ENCODE measurements at regions of chr3 and their contacts with region 1.

Region 1: GRCh38 chr3:69691860-69692259 is 47.4 kb upstream of the MITF start:
- DNase-seq: no peak
- H3K4me3 ChIP-seq: no peak overlapping the region
- H3K4me1 ChIP-seq: 0 out of 2 replicates have a peak, but pooled peaks cover 2% of the 10 kb centered on the region
- H3K27me3 ChIP-seq: 0 out of 2 replicates have a peak, but pooled peaks cover 3% of the 10 kb centered on the region

Region 2: DNA sequence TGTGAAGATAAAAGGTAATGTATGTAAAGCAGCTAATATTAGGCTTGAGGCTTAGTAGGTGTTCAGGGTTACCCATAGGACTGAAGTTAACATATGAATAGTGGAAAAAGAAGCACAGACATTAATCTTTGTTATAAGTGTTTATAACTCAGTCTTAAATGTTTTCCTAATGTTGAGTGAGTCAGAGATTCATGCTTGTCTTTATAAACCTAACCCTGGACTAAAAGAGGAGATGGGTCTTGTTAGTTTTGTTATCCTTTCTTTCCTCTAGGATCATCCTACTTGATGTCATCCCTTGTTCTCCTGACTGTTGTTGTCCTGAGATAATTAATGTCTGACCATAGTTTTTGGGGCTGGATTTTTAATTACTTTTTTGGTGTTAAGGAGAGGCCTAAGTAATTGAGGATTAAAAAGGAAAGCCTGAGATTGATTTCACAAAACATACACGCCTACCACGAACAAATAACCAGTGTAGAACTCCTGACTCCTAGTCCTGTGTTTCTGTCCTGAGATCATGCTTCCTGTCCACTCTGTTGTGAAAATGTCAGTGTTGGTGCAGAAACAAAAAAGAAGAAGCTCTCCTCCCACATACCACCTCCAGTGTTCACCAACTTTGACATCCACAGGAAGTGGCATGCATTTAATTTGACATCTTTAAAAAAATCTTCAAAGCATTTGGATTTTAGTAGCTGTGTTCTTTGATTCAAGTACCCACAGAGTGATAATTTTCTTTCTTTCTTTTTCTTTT is 55.8 kb after region 1 on chr3:
- in situ Hi-C with region 1: no loop called
- DNase-seq: no peak
- H3K4me3 ChIP-seq: no peak overlapping the region
- H3K4me1 ChIP-seq: peaks cover 7% of the 10 kb centered on the region
- H3K27me3 ChIP-seq: no peaks in the 10 kb centered on the region

Region 3: DNA sequence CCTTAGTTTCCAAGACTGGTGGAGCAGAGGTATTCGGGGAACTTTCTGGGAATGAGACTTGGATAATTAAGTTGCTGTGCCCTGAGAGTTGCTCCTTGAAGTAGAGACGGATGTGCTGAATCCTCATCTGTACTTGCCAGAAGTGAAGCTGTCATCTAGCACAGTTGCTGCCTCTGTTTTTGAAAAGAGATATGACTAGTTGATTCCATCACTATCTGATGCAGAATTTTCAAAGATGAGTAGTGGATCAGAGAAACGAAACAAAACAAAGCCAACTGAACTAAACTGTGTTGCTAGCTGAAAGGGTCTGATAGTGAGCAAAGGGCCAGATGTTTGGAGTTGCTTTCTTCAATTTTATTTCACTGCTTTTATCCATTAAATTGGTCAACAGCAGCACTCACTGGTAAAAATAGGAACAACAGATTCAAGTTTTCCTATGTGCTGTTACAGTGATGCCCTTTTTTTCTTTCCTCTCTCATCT is 100.1 kb after region 1 on chr3:
- in situ Hi-C with region 1: loop called (anchors 5 kb)
- DNase-seq: peak in 1 of 2 experiments; percentile 46
- H3K4me3 ChIP-seq: no peak overlapping the region
- H3K4me1 ChIP-seq: peaks cover 10% of the 10 kb centered on the region
- H3K27me3 ChIP-seq: no peaks in the 10 kb centered on the region

Region 4: GRCh38 chr3:69948246-69948862 is 256.5 kb after region 1 on chr3:
- in situ Hi-C with region 1: loop called (anchors 10 kb)
- DNase-seq: peak; percentile 12 to 36
- H3K4me3 ChIP-seq: no peak overlapping the region
- H3K4me1 ChIP-seq: peaks cover 3% of the 10 kb centered on the region; the same call in 1 of the 2 replicates
- H3K27me3 ChIP-seq: no peaks in the 10 kb centered on the region

Region 5: DNA sequence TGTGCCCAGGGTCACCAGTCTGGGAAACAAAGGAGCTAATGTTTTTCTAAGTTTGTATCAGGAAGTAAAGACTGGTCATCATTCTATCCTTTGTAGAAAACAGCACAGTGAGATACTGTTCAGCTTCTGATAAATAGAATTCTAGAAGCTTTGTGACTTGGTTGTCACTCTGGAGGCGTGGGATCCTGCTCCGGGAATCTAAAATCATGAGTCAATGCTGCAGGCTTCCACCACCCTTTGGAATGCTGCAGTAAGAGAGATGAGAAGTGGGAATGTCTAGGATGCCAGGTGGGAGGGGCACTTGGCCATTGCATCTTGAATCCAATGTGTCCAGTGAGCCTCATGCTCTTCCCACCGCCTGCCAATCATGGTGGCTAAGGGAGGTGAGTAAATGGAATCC is 348.5 kb after region 1 on chr3:
- in situ Hi-C with region 1: no loop called
- DNase-seq: no peak
- H3K4me3 ChIP-seq: no peak overlapping the region
- H3K4me1 ChIP-seq: peaks cover 22% of the 10 kb centered on the region
- H3K27me3 ChIP-seq: no peaks in the 10 kb centered on the region